ENCODE measurements at regions of chr16 and their contacts with region 1.

Region 1: GRCh38 chr16:67461600-67462592 is 19.1 kb downstream of the ATP6V0D1 start:
- DNase-seq: peak; percentile 92 to 95 (median 93)
- ATAC-seq: peak; percentile 70
- H3K4me3 ChIP-seq: peak overlapping the region; percentile 3
- H3K4me1 ChIP-seq: peaks cover 85% of the 10 kb centered on the region
- CTCF ChIP-seq: no peak

Region 2: GRCh38 chr16:67384778-67385510 is 77.0 kb before region 1 on chr16:
- intact Hi-C with region 1: no loop called
- DNase-seq: no peak
- ATAC-seq: no peak
- H3K4me3 ChIP-seq: no peak overlapping the region
- H3K4me1 ChIP-seq: no peaks in the 10 kb centered on the region
- CTCF ChIP-seq: no peak

Region 3: GRCh38 chr16:67428146-67428731 is 33.7 kb before region 1 on chr16:
- intact Hi-C with region 1: loop called in 1 of 2 experiments (anchors 5 kb)
- DNase-seq: peak; percentile 83 to 87 (median 84)
- ATAC-seq: peak; percentile 57
- H3K4me3 ChIP-seq: no peak overlapping the region
- H3K4me1 ChIP-seq: peaks cover 15% of the 10 kb centered on the region
- CTCF ChIP-seq: peak; percentile 72

Region 4: GRCh38 chr16:67653128-67653786 is 191.4 kb after region 1 on chr16:
- intact Hi-C with region 1: no loop called
- DNase-seq: no peak
- ATAC-seq: peak; percentile 6
- H3K4me3 ChIP-seq: no peak overlapping the region
- H3K4me1 ChIP-seq: peaks cover 6% of the 10 kb centered on the region
- CTCF ChIP-seq: no peak